AG04449 (cell line): ENCODE measurements at regions of chr12 and their contacts with region 1.

Region 1: GRCh38 chr12:122880668-122881067 is 15.3 kb downstream of the VPS37B start:
- DNase-seq: no peak
- H3K4me3 ChIP-seq: no peak overlapping the region
- CTCF ChIP-seq: peak; percentile 71

Region 2: GRCh38 chr12:122865268-122866231 is 15.1 kb before region 1 on chr12:
- CTCF ChIA-PET with region 1: interaction called, 38 read pairs
- POLR2A ChIA-PET with region 1: no interaction called
- DNase-seq: no peak
- H3K4me3 ChIP-seq: no peak overlapping the region
- CTCF ChIP-seq: peak; percentile 45

Region 3: GRCh38 chr12:122895705-122896636 is 15.3 kb after region 1 on chr12 and contains the start of gene VPS37B:
- CTCF ChIA-PET with region 1: interaction called, 38 read pairs
- POLR2A ChIA-PET with region 1: interaction called, 3 read pairs
- DNase-seq: no peak
- H3K4me3 ChIP-seq: peak within 1 kb of the TSS; percentile 80
- CTCF ChIP-seq: no peak

Region 4: GRCh38 chr12:122917504-122918121 is 36.9 kb after region 1 on chr12:
- CTCF ChIA-PET with region 1: no interaction called
- POLR2A ChIA-PET with region 1: no interaction called
- DNase-seq: peak; percentile 28
- H3K4me3 ChIP-seq: no peak overlapping the region
- CTCF ChIP-seq: no peak

Region 5: DNA sequence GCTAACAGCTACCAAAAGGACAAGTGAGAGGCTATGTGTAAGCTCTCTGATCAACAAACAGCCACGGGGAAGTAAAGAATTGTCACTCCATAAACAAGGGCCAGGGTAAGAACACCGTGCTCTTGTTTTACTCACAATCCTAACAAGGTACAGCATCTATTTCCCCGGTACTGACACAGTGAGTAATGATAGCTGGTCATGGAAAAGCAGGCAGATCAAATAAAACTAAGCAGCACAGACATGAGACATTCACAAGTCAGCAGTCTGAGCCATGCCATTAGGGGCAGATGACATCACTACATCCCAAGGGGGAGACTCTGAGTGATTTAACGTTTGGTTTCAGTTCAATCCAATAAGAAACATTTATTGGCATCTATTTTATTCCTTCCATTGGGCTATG is 154.2 kb after region 1 on chr12:
- CTCF ChIA-PET with region 1: no interaction called
- POLR2A ChIA-PET with region 1: no interaction called
- DNase-seq: no peak
- H3K4me3 ChIP-seq: no peak overlapping the region
- CTCF ChIP-seq: no peak